ENCODE measurements at regions of chr4 and their contacts with region 1.

Region 1: GRCh38 chr4:25439918-25440477 is 62.9 kb downstream of the ANAPC4 start:
- DNase-seq: no peak
- ATAC-seq: peak; percentile 72

Region 2: DNA sequence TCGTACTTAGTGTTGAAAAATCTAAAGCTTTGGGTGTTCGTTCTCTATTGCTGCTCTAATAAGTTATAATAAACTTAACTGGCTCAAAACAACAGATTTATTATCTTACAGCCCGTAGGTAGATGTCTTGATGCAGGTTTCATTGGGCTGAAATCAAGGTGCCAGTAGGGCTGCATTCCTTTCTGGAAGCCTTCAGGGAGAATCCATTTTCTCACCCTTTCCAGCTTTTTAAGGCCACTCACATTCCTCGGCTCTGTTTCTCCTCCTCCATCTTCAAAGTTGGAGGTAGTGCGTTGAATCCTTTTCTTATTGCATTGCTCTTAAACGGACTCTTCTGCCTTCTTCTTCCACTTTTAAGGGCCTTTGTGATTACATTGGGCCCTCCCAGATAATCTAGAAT is 157.9 kb before region 1 on chr4:
- intact Hi-C with region 1: no loop called
- DNase-seq: no peak
- ATAC-seq: no peak

Region 3: GRCh38 chr4:25477221-25477620 is 37.2 kb after region 1 on chr4:
- intact Hi-C with region 1: no loop called
- DNase-seq: no peak
- ATAC-seq: no peak

Region 4: DNA sequence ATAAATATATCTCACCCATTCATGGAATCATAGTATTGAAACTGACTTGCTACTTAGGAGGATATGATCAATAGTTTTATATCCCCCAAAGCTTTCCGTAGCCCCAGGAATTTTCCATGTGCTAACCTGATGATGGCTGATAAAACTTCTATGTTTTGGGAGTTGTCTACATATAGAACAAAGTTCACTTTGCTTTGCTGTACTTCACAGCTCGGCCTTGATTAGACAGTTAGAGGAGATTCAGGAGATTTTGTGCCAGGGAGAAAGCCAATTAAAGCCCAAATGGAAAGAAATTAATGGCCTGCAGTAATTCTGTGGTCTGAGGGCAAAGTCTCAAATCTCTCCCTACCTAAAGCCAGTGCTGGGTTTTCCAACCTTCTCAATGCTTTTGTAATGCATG is 100.7 kb after region 1 on chr4:
- intact Hi-C with region 1: no loop called
- DNase-seq: no peak
- ATAC-seq: no peak

Region 5: DNA sequence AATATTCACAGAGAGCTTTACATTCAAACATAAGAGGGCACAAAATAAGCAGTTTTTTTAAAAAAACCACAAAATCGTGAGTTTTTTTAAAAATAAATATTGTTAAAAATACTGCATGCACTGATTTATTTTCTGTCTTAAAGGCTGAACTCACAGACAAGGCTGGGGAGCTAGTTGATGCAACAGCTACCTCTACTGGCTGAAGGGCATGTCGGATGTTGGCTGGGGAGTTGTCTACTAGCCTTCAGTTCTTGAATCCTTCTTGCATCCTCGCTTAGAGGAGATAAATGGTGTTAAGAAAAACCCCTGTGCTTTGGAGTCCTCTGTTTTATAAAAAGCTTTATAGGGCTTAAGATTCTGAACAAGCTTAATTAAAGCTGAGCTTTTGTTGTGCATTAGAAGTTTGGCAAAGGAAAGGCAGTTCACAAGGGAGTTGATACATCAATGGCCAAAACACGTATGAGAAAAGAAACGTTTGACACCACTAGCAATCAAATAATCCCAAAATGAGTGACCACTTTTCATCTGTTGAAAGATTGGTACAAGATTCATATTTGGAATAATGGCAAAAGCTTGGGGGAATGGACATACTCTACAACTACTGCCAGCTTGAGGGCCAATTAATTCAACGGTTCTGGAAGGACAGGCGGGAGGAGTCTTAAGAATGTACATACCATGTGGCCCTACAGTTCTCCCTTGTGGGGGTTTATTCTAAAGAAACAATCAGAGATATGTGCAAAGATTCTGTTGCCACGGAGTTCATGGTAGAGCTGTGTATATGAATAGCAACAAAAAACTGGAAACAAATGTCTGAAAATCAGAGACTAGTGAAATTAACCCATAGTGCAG is 328.1 kb after region 1 on chr4:
- intact Hi-C with region 1: loop called (anchors 1 kb)
- DNase-seq: no peak
- ATAC-seq: peak; percentile 81

Measured in Right ventricle myocardium inferior (tissue), 1 donor.